Activated CD8-positive, alpha-beta T cell treated with anti-CD3 and anti-CD28 coated beads, Interleukin-2, amount 10 ng/mL, durations not matched to agents 7 days and 5 days (primary cell): ENCODE measurements at regions of chr4 and their contacts with region 1.

Region 1: DNA sequence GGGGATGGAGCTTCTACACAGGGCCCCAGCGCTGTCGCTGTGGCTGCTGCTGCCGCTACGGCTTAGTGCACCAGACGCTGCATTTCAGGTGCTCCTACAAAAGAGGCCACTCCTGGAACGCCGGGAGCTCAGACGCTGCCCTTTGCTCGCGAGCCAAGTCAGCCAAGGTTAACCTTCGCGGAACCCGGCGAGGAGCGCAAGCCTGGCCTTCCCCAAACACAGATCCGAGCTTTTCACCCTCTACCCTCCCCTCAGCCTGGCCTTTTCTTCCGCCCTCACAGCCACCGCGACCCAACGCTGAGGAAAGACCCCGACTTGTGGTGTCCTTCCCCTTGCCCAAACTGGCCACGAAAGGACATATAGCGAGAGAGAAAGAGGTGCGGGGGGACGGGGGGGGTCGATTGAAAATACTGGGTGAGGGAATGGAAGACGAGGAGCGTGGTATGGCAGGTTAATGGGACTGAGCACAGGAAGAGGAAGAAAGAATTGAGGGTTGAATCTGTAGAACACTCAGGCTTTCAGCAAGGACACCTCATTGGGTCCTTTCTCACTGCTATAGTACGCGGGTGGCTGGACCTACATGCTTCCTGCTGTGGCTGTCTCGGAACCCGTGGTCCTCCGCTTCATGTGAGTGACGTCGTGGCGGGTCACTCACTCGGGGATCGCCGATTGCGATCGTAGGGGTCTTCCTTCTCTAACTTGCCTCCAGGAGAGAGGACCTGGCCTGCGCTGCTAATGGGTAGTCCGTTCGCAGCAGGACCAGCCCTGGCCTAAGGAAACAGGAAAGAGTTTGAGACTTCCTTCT is at the starts of genes AIMP1 and TBCK:
- DNase-seq: peak; percentile 91
- ATAC-seq: peak; percentile 88
- H3K4me3 Mint-ChIP-seq: no peak within 1 kb of the TSS
- H3K27ac Mint-ChIP-seq: no peak within 1 kb of the TSS
- H3K4me1 Mint-ChIP-seq: peaks cover 29% of the 10 kb centered on the region
- H3K27me3 Mint-ChIP-seq: no peaks in the 10 kb centered on the region
- total RNA-seq, gene AIMP1: 47.1 to 58.0 TPM
- total RNA-seq, gene TBCK: 33.7 to 36.8 TPM

Region 2: GRCh38 chr4:106303548-106304281 is 12.5 kb before region 1 on chr4:
- CTCF ChIA-PET with region 1: no interaction called
- POLR2A ChIA-PET with region 1: interaction called, 10 read pairs
- DNase-seq: no peak
- ATAC-seq: no peak
- H3K4me3 Mint-ChIP-seq: no peak overlapping the region
- H3K27ac Mint-ChIP-seq: no peak overlapping the region
- H3K4me1 Mint-ChIP-seq: no peaks in the 10 kb centered on the region
- H3K27me3 Mint-ChIP-seq: no peaks in the 10 kb centered on the region

Region 3: GRCh38 chr4:106329041-106329618 is 13.0 kb after region 1 on chr4:
- CTCF ChIA-PET with region 1: interaction called, 11 read pairs
- POLR2A ChIA-PET with region 1: interaction called, 10 read pairs
- DNase-seq: no peak
- ATAC-seq: peak; percentile 86
- H3K4me3 Mint-ChIP-seq: no peak overlapping the region
- H3K27ac Mint-ChIP-seq: no peak overlapping the region
- H3K4me1 Mint-ChIP-seq: no peaks in the 10 kb centered on the region
- H3K27me3 Mint-ChIP-seq: no peaks in the 10 kb centered on the region